ENCODE measurements at regions of chr22 and their contacts with region 1.

Region 1: DNA sequence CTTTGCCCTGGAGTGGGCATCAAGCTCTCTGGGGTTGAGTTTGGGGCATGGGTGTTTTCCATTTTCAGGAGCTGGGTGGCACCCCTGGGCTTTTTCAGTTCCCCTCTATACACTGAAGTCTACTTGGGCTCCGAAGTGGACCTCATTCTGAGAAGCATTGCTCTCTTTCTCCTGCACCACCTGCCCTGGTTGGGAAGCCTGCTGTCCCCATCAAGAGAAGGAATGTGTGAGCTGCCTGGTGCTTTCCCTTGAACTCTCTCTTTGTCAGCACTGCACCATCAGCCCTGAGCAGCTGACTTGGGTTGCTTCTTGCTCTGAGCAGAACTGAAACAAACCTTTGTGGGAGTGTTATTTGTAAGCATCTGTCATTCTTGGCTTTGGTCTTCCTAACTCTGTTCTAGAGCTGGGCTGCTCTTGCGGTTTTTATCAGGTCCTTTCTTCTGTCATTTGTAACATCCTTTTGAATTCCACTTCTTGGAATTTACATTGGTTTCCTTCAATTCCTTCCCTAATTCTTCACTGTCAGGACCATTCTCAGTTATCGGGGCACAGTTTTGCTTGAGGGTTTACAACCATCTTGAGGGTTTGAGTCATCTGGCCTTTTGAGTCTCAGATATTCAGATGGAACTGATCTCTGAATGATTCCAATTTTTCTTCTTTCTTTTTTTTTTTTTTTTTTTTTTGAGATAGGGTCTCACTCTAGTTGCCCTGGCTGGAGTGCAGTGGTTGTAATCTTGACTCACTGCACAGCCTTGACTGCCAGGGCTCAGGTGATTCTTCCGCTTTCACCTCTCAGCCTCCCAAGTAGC is 20.5 kb downstream of the UBE2L3 start:
- DNase-seq: peak in 3 of 4 experiments; percentile 74 to 96 (median 93)
- ATAC-seq: peak; percentile 71
- H3K4me3 ChIP-seq: no peak overlapping the region
- H3K27ac ChIP-seq: peak overlapping the region; percentile 7
- H3K4me1 ChIP-seq: peaks cover 34 to 38% of the 10 kb centered on the region in 2 experiments
- H3K27me3 ChIP-seq: no peaks in the 10 kb centered on the region; a peak in 1 of 5 replicates
- CTCF ChIP-seq: no peak
- EP300 ChIP-seq: peak; percentile 88
- POLR2A ChIP-seq: no peak
- RAD21 ChIP-seq: peak; percentile 34 to 46

Region 2: GRCh38 chr22:21606775-21607174 is 18.8 kb after region 1 on chr22:
- CTCF ChIA-PET with region 1: interaction called, 3 read pairs
- POLR2A ChIA-PET with region 1: interaction called, 4,622 read pairs
- in situ Hi-C with region 1: no loop called
- intact Hi-C with region 1: loop called (anchors 2 kb)
- DNase-seq: peak in 3 of 4 experiments; percentile 59 to 73 (median 66)
- ATAC-seq: peak; percentile 18
- H3K4me3 ChIP-seq: no peak overlapping the region
- H3K27ac ChIP-seq: peak overlapping the region; percentile 9; the same call in 2 of the 3 replicates
- H3K4me1 ChIP-seq: peaks cover 26% of the 10 kb centered on the region in 2 experiments
- H3K27me3 ChIP-seq: peaks cover 0 to 2% of the 10 kb centered on the region in 2 experiments; a peak in 1 of 5 replicates
- CTCF ChIP-seq: 0 out of 6 replicates have a peak, but pooled peaks of 1 of the 3 experiments have one; percentile 8
- EP300 ChIP-seq: no peak
- POLR2A ChIP-seq: no peak
- RAD21 ChIP-seq: no peak

Region 3: GRCh38 chr22:21624120-21624879 is 36.3 kb after region 1 on chr22:
- CTCF ChIA-PET with region 1: no interaction called
- POLR2A ChIA-PET with region 1: interaction called, 4,622 read pairs
- in situ Hi-C with region 1: no loop called
- intact Hi-C with region 1: loop called (anchors 2 kb)
- DNase-seq: peak; percentile 90 to 97 (median 94)
- ATAC-seq: peak; percentile 53
- H3K4me3 ChIP-seq: no peak overlapping the region
- H3K27ac ChIP-seq: peak overlapping the region; percentile 4; the same call in 2 of the 3 replicates
- H3K4me1 ChIP-seq: peaks cover 38 to 69% of the 10 kb centered on the region in 2 experiments
- H3K27me3 ChIP-seq: no peaks in the 10 kb centered on the region
- CTCF ChIP-seq: peak in 1 of 3 experiments; percentile 99; a peak in 2 of 6 replicates
- EP300 ChIP-seq: peak; percentile 57
- POLR2A ChIP-seq: no peak
- RAD21 ChIP-seq: no peak

Region 4: GRCh38 chr22:21996175-21996720 is 408.2 kb after region 1 on chr22:
- CTCF ChIA-PET with region 1: no interaction called
- POLR2A ChIA-PET with region 1: no interaction called
- in situ Hi-C with region 1: no loop called
- intact Hi-C with region 1: no loop called
- DNase-seq: no peak
- ATAC-seq: no peak
- H3K4me3 ChIP-seq: no peak overlapping the region
- H3K27ac ChIP-seq: no peak overlapping the region
- H3K4me1 ChIP-seq: peaks cover 9 to 22% of the 10 kb centered on the region in 2 experiments
- H3K27me3 ChIP-seq: no peaks in the 10 kb centered on the region
- CTCF ChIP-seq: no peak
- EP300 ChIP-seq: no peak
- POLR2A ChIP-seq: no peak
- RAD21 ChIP-seq: no peak